GM12878 (cell line): ENCODE measurements at regions of chr5 and their contacts with region 1.

Region 1: GRCh38 chr5:153147891-153148623 is 342.4 kb upstream of the GRIA1 start:
- DNase-seq: no peak
- ATAC-seq: peak; percentile 89
- H3K4me3 ChIP-seq: no peak overlapping the region
- H3K27ac ChIP-seq: no peak overlapping the region
- H3K4me1 ChIP-seq: no peaks in the 10 kb centered on the region
- H3K27me3 ChIP-seq: no peaks in the 10 kb centered on the region
- CTCF ChIP-seq: peak; percentile 55 to 61 (median 56); a peak in 5 of 6 replicates
- EP300 ChIP-seq: no peak
- POLR2A ChIP-seq: no peak
- RAD21 ChIP-seq: peak; percentile 60

Region 2: GRCh38 chr5:152532714-152533113 is 615.3 kb before region 1 on chr5:
- CTCF ChIA-PET with region 1: interaction called, 16 read pairs
- POLR2A ChIA-PET with region 1: no interaction called
- RAD21 ChIA-PET with region 1: interaction called, 9 read pairs
- SMC1A ChIA-PET with region 1: interaction called, 9 read pairs
- in situ Hi-C with region 1: no loop called
- intact Hi-C with region 1: loop called (anchors 2 kb)
- DNase-seq: peak; percentile 15
- ATAC-seq: peak; percentile 80
- H3K4me3 ChIP-seq: no peak overlapping the region
- H3K27ac ChIP-seq: no peak overlapping the region
- H3K4me1 ChIP-seq: no peaks in the 10 kb centered on the region
- H3K27me3 ChIP-seq: no peaks in the 10 kb centered on the region
- CTCF ChIP-seq: peak; percentile 32 to 65 (median 43); a peak in 4 of 6 replicates
- EP300 ChIP-seq: no peak
- POLR2A ChIP-seq: no peak
- RAD21 ChIP-seq: peak; percentile 86

Region 3: DNA sequence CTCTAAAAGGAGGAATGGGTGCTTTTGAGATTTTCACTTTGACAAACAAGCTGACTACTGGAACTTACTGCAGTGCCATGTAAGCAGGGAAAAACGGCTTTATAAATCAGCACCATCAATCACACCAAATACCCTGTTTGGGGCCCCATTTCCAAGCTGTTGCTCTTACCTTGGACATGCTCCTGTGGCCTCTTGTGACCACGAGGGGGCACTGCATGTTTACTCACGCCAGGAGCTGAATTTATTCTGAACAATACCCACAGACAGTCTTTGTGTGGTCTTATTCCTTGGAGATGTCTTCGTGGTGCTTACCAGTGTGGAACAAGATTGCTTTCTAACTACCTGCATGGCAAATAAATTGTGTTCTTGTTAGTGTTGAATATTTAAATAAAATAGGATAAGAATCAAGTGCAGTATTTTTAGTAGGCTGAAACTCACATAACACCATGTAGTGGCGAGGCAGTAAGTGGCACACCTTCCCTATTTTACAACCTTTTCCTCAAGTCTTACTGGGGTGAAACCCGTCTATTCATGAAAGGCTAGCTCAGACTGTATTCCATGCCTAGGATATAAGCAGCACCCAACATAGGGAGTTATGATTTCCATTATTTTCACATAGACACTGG is 587.4 kb before region 1 on chr5:
- CTCF ChIA-PET with region 1: interaction called, 14 read pairs
- POLR2A ChIA-PET with region 1: no interaction called
- RAD21 ChIA-PET with region 1: interaction called, 7 read pairs
- SMC1A ChIA-PET with region 1: interaction called, 11 read pairs
- in situ Hi-C with region 1: loop called (anchors 10 kb)
- intact Hi-C with region 1: loop called (anchors 1 kb)
- DNase-seq: no peak
- ATAC-seq: peak; percentile 90
- H3K4me3 ChIP-seq: no peak overlapping the region
- H3K27ac ChIP-seq: no peak overlapping the region
- H3K4me1 ChIP-seq: no peaks in the 10 kb centered on the region
- H3K27me3 ChIP-seq: no peaks in the 10 kb centered on the region
- CTCF ChIP-seq: peak; percentile 73 to 75 (median 74)
- EP300 ChIP-seq: no peak
- POLR2A ChIP-seq: no peak
- RAD21 ChIP-seq: peak; percentile 83

Region 4: DNA sequence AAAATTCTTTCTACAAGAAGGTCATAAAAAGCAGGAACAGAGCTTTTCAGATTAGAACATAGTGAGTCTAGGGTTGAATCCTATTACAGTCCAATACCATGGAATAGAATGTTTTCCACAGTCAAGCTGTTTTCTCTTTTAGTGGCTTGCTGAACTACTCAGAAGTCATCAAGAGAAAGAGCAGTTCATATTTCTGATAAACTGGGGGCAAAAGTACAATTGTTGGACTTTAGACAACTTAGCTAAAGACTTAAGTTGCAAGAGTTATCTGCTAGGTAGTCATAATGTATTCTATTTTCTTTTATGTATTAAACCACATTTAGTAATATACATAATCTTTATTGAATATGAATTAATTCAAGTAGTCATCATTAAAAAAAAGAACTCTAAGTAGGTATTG is 109.3 kb after region 1 on chr5:
- CTCF ChIA-PET with region 1: no interaction called
- POLR2A ChIA-PET with region 1: no interaction called
- RAD21 ChIA-PET with region 1: no interaction called
- SMC1A ChIA-PET with region 1: no interaction called
- in situ Hi-C with region 1: no loop called
- intact Hi-C with region 1: no loop called
- DNase-seq: no peak
- ATAC-seq: no peak
- H3K4me3 ChIP-seq: no peak overlapping the region
- H3K27ac ChIP-seq: no peak overlapping the region
- H3K4me1 ChIP-seq: no peaks in the 10 kb centered on the region
- H3K27me3 ChIP-seq: no peaks in the 10 kb centered on the region
- CTCF ChIP-seq: no peak
- EP300 ChIP-seq: no peak
- POLR2A ChIP-seq: no peak
- RAD21 ChIP-seq: no peak